IMR-90 (cell line): ENCODE measurements at regions of chr3 and their contacts with region 1.

Region 1: GRCh38 chr3:16290007-16290826 is 25.2 kb downstream of the OXNAD1 start:
- DNase-seq: peak; percentile 67
- ATAC-seq: peak; percentile 81
- H3K4me3 ChIP-seq: no peak overlapping the region
- H3K27ac ChIP-seq: no peak overlapping the region
- H3K4me1 ChIP-seq: peaks cover 2% of the 10 kb centered on the region; the same call in 1 of the 2 replicates
- H3K27me3 ChIP-seq: no peaks in the 10 kb centered on the region
- CTCF ChIP-seq: peak; percentile 90
- POLR2A ChIP-seq: no peak
- RAD21 ChIP-seq: peak; percentile 96

Region 2: GRCh38 chr3:16186086-16186485 is 104.1 kb before region 1 on chr3:
- CTCF ChIA-PET with region 1: no interaction called
- POLR2A ChIA-PET with region 1: no interaction called
- dilution Hi-C with region 1: no loop called
- in situ Hi-C with region 1: no loop called
- intact Hi-C with region 1: no loop called
- DNase-seq: peak; percentile 35
- ATAC-seq: no peak
- H3K4me3 ChIP-seq: no peak overlapping the region
- H3K27ac ChIP-seq: no peak overlapping the region
- H3K4me1 ChIP-seq: peaks cover 19% of the 10 kb centered on the region
- H3K27me3 ChIP-seq: no peaks in the 10 kb centered on the region
- CTCF ChIP-seq: no peak
- POLR2A ChIP-seq: no peak
- RAD21 ChIP-seq: no peak

Region 3: DNA sequence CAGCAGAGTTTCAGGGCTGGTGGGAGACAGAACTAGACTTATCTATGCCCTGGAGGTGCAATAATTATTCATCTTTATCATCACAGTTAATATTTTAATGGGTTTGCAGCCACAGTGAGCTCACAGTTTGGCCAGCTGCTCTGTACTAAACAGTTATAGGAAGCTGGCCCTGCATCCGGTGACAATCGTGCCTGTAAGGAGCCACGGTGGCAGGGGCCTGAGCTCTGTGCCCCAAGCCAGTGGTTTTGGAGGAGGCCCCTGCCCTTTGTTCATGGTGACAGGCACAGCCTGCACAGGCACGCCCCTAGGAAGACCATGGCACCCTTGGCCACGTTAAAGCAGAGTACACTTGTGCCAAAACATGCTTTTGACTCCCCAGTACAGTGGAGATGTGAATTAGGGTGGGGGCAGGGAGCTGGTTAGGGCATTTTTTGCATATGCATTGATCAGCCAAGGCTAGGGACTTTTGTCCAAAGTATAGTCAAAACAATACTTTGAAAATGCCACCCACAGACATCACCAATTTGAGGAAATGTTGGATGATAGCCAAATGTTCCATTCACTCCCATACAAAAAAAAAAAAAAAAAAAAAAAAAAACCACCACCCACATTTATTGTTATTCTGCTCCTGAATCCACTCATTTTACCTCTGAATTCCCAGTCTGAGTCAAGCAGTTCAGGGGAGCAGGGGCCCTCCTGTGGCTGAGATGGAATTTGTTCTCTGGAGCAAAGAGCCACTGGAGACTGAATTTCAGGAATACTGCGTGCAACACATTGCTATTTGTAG is 226.7 kb after region 1 on chr3:
- CTCF ChIA-PET with region 1: interaction called, 18 read pairs
- POLR2A ChIA-PET with region 1: no interaction called
- dilution Hi-C with region 1: no loop called
- in situ Hi-C with region 1: no loop called
- intact Hi-C with region 1: loop called (anchors 1 kb)
- DNase-seq: peak; percentile 74
- ATAC-seq: peak; percentile 32
- H3K4me3 ChIP-seq: no peak overlapping the region
- H3K27ac ChIP-seq: peak overlapping the region; percentile 11; the same call in 1 of the 2 replicates
- H3K4me1 ChIP-seq: peaks cover 7% of the 10 kb centered on the region
- H3K27me3 ChIP-seq: peaks cover 3% of the 10 kb centered on the region; the same call in 1 of the 2 replicates
- CTCF ChIP-seq: peak; percentile 76
- POLR2A ChIP-seq: no peak
- RAD21 ChIP-seq: peak; percentile 82

Region 4: GRCh38 chr3:16529264-16529663 is 239.0 kb after region 1 on chr3:
- CTCF ChIA-PET with region 1: interaction called, 5 read pairs
- POLR2A ChIA-PET with region 1: no interaction called
- dilution Hi-C with region 1: loop called (anchors 25 kb)
- in situ Hi-C with region 1: no loop called
- intact Hi-C with region 1: no loop called
- DNase-seq: no peak
- ATAC-seq: no peak
- H3K4me3 ChIP-seq: no peak overlapping the region
- H3K27ac ChIP-seq: no peak overlapping the region
- H3K4me1 ChIP-seq: no peaks in the 10 kb centered on the region
- H3K27me3 ChIP-seq: peaks cover 37% of the 10 kb centered on the region
- CTCF ChIP-seq: peak; percentile 31
- POLR2A ChIP-seq: no peak
- RAD21 ChIP-seq: no peak

Region 5: DNA sequence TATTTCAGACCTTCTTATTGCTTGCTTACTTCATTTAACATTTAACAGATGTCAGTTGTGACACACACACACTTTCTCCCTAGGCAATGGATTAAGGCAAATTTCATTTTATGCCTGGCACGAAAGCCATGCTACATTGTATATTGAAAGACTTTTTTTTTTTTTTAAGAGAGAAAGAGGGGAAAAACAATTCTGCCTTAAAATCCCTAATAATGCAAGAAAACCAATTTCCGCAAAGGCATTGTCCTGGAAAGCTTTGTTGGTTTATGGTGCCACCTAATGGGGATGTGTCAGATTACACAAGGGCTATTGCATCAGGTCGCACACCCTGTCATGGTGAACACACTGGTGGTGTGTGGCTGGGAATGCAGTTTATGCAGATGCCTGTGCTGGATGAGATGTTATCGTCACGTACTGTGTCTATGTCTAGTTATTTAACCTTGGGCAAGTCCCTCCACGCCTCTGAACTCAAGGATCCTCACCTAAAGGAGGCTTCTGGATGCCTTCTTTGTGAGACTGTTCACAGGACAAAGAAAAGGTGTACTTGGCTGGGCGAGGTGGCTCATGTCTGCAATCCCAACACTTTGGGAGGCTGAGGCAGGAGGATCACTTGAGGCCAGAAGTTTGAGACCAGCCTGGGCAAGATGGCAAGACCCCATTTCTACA is 260.6 kb after region 1 on chr3:
- CTCF ChIA-PET with region 1: interaction called, 18 read pairs
- POLR2A ChIA-PET with region 1: no interaction called
- dilution Hi-C with region 1: loop called (anchors 25 kb)
- in situ Hi-C with region 1: loop called (anchors 5 kb)
- intact Hi-C with region 1: loop called (anchors 1 kb)
- DNase-seq: peak; percentile 88
- ATAC-seq: peak; percentile 97
- H3K4me3 ChIP-seq: no peak overlapping the region
- H3K27ac ChIP-seq: no peak overlapping the region
- H3K4me1 ChIP-seq: no peaks in the 10 kb centered on the region; the same call in 1 of the 2 replicates
- H3K27me3 ChIP-seq: peaks cover 18% of the 10 kb centered on the region
- CTCF ChIP-seq: peak; percentile 98
- POLR2A ChIP-seq: no peak
- RAD21 ChIP-seq: peak; percentile 98

Region 6: GRCh38 chr3:16884084-16884747 is 594.0 kb after region 1 on chr3:
- CTCF ChIA-PET with region 1: interaction called, 3 read pairs
- POLR2A ChIA-PET with region 1: no interaction called
- dilution Hi-C with region 1: no loop called
- in situ Hi-C with region 1: loop called (anchors 25 kb)
- intact Hi-C with region 1: no loop called
- DNase-seq: peak; percentile 6
- ATAC-seq: peak; percentile 68
- H3K4me3 ChIP-seq: peak overlapping the region; percentile 59
- H3K27ac ChIP-seq: no peak overlapping the region; the same call in 1 of the 2 replicates
- H3K4me1 ChIP-seq: peaks cover 4% of the 10 kb centered on the region; the same call in 1 of the 2 replicates
- H3K27me3 ChIP-seq: peaks cover 4% of the 10 kb centered on the region
- CTCF ChIP-seq: peak; percentile 39
- POLR2A ChIP-seq: no peak
- RAD21 ChIP-seq: peak; percentile 23; the same call in 1 of the 2 replicates

Region 7: GRCh38 chr3:17032407-17033034 is 742.3 kb after region 1 on chr3:
- CTCF ChIA-PET with region 1: no interaction called
- POLR2A ChIA-PET with region 1: no interaction called
- dilution Hi-C with region 1: no loop called
- in situ Hi-C with region 1: loop called (anchors 25 kb)
- intact Hi-C with region 1: no loop called
- DNase-seq: peak; percentile 36
- ATAC-seq: peak; percentile 80
- H3K4me3 ChIP-seq: no peak overlapping the region
- H3K27ac ChIP-seq: no peak overlapping the region
- H3K4me1 ChIP-seq: no peaks in the 10 kb centered on the region
- H3K27me3 ChIP-seq: no peaks in the 10 kb centered on the region
- CTCF ChIP-seq: peak; percentile 49
- POLR2A ChIP-seq: no peak
- RAD21 ChIP-seq: peak; percentile 50

Region 8: DNA sequence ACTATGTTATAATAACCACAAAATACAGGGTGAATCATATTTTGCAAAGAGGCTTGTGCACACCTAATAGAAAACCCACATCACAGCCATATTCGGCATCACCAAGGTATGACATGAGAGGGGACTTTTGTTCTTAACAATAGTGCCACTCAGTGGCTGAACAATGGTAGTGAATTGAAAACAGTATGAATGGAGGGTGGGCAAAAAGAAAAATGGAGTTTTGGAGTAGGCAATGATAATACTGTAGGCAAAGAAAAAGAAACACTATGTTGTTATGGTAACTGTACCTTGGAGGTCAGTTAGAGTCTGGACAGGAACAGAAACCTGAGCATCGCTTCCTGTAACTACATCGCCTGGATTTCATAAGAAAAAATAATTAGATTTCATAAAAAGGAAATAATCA is 943.2 kb after region 1 on chr3:
- CTCF ChIA-PET with region 1: no interaction called
- POLR2A ChIA-PET with region 1: no interaction called
- dilution Hi-C with region 1: no loop called
- in situ Hi-C with region 1: loop called (anchors 25 kb)
- intact Hi-C with region 1: no loop called
- DNase-seq: peak; percentile 67
- ATAC-seq: peak; percentile 86
- H3K4me3 ChIP-seq: no peak overlapping the region
- H3K27ac ChIP-seq: no peak overlapping the region
- H3K4me1 ChIP-seq: no peaks in the 10 kb centered on the region
- H3K27me3 ChIP-seq: no peaks in the 10 kb centered on the region
- CTCF ChIP-seq: peak; percentile 75
- POLR2A ChIP-seq: no peak
- RAD21 ChIP-seq: peak; percentile 87